ENCODE measurements at regions of chr1 and their contacts with region 1.

Region 1: DNA sequence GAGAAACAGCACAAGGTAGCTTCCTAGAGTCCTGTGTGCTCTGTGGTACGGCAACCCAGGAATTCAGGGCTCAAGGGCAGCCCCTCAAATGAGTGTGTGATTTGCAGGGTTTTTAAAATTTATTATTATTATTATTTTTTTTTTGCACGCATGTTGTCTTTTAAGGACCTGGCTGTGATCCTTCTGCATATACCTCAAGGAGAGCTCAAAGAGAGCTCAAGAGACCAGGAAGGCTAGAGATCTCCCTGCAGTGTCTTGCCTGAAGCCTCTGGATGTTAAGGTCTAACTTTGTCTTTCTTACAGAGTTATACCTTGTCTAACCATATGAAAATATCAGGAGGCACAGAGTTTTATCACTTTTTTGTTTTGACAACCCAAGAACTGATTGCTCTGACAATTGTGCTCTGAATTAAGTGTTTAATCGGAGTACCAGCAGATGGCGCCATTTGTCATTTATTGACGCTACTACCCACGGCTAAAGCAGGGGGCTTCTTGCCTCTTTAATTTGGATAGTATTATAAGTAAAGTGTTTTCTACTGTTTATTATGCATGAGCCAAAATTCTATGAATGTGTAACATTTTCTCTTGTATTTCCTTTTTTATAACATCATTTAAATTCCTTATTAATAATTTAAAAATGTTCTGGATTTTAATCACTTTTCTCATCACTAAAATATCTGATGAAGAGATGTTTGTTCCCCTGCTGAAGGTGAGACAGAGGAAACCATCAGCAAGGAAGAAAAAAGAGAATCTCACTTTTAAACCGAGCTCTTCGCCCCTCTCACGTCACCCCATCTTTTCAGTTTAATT is 35.8 kb upstream of the LMO4 start:
- DNase-seq: peak; percentile 65
- ATAC-seq: peak; percentile 68; the same call in 1 of the 2 replicates
- H3K4me3 ChIP-seq: no peak overlapping the region
- H3K27ac ChIP-seq: no peak overlapping the region
- H3K4me1 ChIP-seq: 0 out of 2 replicates have a peak, but pooled peaks cover 1% of the 10 kb centered on the region
- H3K27me3 ChIP-seq: peaks cover 2% of the 10 kb centered on the region
- CTCF ChIP-seq: peak; percentile 77
- POLR2A ChIP-seq: no peak
- RAD21 ChIP-seq: peak; percentile 77

Region 2: GRCh38 chr1:86345042-86345441 is 947.8 kb before region 1 on chr1:
- CTCF ChIA-PET with region 1: no interaction called
- POLR2A ChIA-PET with region 1: no interaction called
- dilution Hi-C with region 1: no loop called
- in situ Hi-C with region 1: no loop called
- intact Hi-C with region 1: no loop called
- DNase-seq: no peak
- ATAC-seq: no peak
- H3K4me3 ChIP-seq: no peak overlapping the region
- H3K27ac ChIP-seq: no peak overlapping the region
- H3K4me1 ChIP-seq: no peaks in the 10 kb centered on the region
- H3K27me3 ChIP-seq: no peaks in the 10 kb centered on the region
- CTCF ChIP-seq: no peak
- POLR2A ChIP-seq: no peak
- RAD21 ChIP-seq: no peak

Region 3: DNA sequence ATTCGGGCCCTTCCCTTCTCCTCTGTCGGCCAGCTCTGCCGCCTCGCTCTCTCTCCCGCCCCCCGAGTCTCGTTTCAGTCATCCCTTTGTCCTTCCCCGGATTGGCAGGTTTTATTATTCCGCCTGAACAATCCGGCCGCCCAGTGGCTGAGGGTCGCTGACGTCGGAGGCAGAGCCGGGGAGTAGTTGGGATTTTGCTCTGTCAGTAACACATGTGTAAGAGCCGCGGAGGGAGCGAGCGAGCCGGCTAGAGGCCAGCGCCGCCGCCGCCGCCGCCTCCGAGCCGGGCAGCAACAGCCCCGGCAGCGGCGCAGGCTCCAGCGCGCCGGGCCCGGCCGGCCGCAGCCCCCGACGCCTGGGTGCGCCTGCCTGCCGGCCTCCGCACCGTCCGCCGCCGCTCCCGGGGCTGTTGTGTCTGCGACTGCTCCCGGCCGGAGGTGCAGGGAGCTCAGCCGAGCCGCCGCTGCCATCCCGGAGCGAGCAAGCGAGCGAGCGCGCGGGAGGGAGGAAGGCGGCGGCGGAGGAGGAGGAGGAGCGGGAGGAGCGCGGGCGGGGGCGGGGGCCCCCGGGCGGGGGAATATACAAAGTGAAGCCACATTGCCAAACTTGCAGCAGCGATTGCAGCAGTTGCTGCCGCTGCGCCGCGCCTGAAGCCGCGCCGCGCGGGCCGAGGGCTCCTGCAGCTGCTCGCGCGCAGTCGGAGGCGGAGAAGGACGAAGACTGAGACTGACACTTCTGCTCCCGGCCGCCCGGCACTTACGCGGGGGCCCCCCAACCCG is 35.6 kb after region 1 on chr1 and contains the start of gene LMO4:
- CTCF ChIA-PET with region 1: no interaction called
- POLR2A ChIA-PET with region 1: no interaction called
- dilution Hi-C with region 1: no loop called
- in situ Hi-C with region 1: no loop called
- intact Hi-C with region 1: no loop called
- DNase-seq: peak; percentile 98
- ATAC-seq: peak; percentile 81
- H3K4me3 ChIP-seq: peak within 1 kb of the TSS; percentile 82
- H3K27ac ChIP-seq: peak within 1 kb of the TSS; percentile 100
- H3K4me1 ChIP-seq: peaks cover 4% of the 10 kb centered on the region; the same call in 1 of the 2 replicates
- H3K27me3 ChIP-seq: no peaks in the 10 kb centered on the region
- CTCF ChIP-seq: no peak
- POLR2A ChIP-seq: peak; percentile 93
- RAD21 ChIP-seq: no peak
- total RNA-seq, gene LMO4: 85.8 and 98.9 TPM in 2 replicates

Region 4: DNA sequence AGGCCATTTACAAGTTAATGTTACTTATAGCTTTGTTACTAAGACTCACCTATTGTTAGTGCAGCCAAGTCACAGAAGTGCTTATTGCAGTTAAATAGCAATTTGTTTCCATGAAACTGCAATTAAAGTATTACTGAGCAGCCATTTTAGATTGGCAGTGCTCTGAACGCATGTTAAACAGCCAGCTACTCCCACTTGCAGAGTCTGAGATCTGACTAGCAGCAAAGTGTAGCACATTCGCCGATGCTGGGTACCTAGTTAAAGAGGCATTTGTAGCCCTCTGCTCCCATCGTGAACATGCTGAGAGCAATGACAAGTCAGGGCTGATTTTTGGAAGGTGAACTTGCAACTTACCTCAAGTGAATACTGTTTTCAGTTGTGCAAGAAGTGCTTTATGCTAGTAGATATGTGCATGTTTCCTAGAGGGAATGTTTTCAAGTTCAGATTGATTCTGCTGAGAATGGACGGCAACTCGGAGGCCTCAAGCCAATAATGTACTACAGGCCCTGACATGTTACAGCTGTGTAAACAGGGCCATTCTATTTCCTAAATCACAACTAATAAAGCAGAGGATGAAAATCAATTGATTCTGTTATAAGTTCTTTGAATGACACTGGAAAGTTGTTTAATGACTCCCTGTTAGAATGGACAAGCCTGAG is 55.6 kb after region 1 on chr1:
- CTCF ChIA-PET with region 1: no interaction called
- POLR2A ChIA-PET with region 1: no interaction called
- dilution Hi-C with region 1: no loop called
- in situ Hi-C with region 1: no loop called
- intact Hi-C with region 1: no loop called
- DNase-seq: no peak
- ATAC-seq: no peak
- H3K4me3 ChIP-seq: no peak overlapping the region
- H3K27ac ChIP-seq: no peak overlapping the region
- H3K4me1 ChIP-seq: peaks cover 2% of the 10 kb centered on the region; the same call in 1 of the 2 replicates
- H3K27me3 ChIP-seq: no peaks in the 10 kb centered on the region
- CTCF ChIP-seq: no peak
- POLR2A ChIP-seq: no peak
- RAD21 ChIP-seq: no peak

Region 5: GRCh38 chr1:87495147-87495546 is 202.3 kb after region 1 on chr1:
- CTCF ChIA-PET with region 1: no interaction called
- POLR2A ChIA-PET with region 1: no interaction called
- dilution Hi-C with region 1: no loop called
- in situ Hi-C with region 1: no loop called
- intact Hi-C with region 1: no loop called
- DNase-seq: no peak
- ATAC-seq: no peak
- H3K4me3 ChIP-seq: no peak overlapping the region
- H3K27ac ChIP-seq: no peak overlapping the region
- H3K4me1 ChIP-seq: no peaks in the 10 kb centered on the region
- H3K27me3 ChIP-seq: no peaks in the 10 kb centered on the region; the same call in 1 of the 2 replicates
- CTCF ChIP-seq: no peak
- POLR2A ChIP-seq: no peak
- RAD21 ChIP-seq: no peak

Region 6: GRCh38 chr1:87953732-87954344 is 660.9 kb after region 1 on chr1:
- CTCF ChIA-PET with region 1: no interaction called
- POLR2A ChIA-PET with region 1: no interaction called
- dilution Hi-C with region 1: no loop called
- in situ Hi-C with region 1: no loop called
- intact Hi-C with region 1: loop called (anchors 1 kb)
- DNase-seq: peak; percentile 79
- ATAC-seq: peak; percentile 71
- H3K4me3 ChIP-seq: no peak overlapping the region
- H3K27ac ChIP-seq: no peak overlapping the region
- H3K4me1 ChIP-seq: peaks cover 2% of the 10 kb centered on the region; the same call in 1 of the 2 replicates
- H3K27me3 ChIP-seq: no peaks in the 10 kb centered on the region
- CTCF ChIP-seq: peak; percentile 82
- POLR2A ChIP-seq: no peak
- RAD21 ChIP-seq: peak; percentile 77

Region 7: GRCh38 chr1:88180449-88181108 is 887.7 kb after region 1 on chr1:
- CTCF ChIA-PET with region 1: no interaction called
- POLR2A ChIA-PET with region 1: no interaction called
- dilution Hi-C with region 1: no loop called
- in situ Hi-C with region 1: no loop called
- intact Hi-C with region 1: loop called (anchors 10 kb)
- DNase-seq: peak; percentile 79
- ATAC-seq: peak; percentile 100
- H3K4me3 ChIP-seq: no peak overlapping the region
- H3K27ac ChIP-seq: no peak overlapping the region
- H3K4me1 ChIP-seq: no peaks in the 10 kb centered on the region; the same call in 1 of the 2 replicates
- H3K27me3 ChIP-seq: no peaks in the 10 kb centered on the region
- CTCF ChIP-seq: peak; percentile 83
- POLR2A ChIP-seq: no peak
- RAD21 ChIP-seq: peak; percentile 76

Region 8: GRCh38 chr1:88311907-88312306 is 1019.0 kb after region 1 on chr1:
- CTCF ChIA-PET with region 1: no interaction called
- POLR2A ChIA-PET with region 1: no interaction called
- dilution Hi-C with region 1: no loop called
- in situ Hi-C with region 1: loop called (anchors 10 kb)
- intact Hi-C with region 1: no loop called
- DNase-seq: no peak
- ATAC-seq: no peak
- H3K4me3 ChIP-seq: no peak overlapping the region
- H3K27ac ChIP-seq: no peak overlapping the region
- H3K4me1 ChIP-seq: no peaks in the 10 kb centered on the region
- H3K27me3 ChIP-seq: no peaks in the 10 kb centered on the region
- CTCF ChIP-seq: no peak
- POLR2A ChIP-seq: no peak
- RAD21 ChIP-seq: no peak